Motor neuron (in vitro differentiated cells): ENCODE measurements at regions of chr14 and their contacts with region 1.

Region 1: GRCh38 chr14:71320107-71320733 is 413.0 kb downstream of the PCNX1 start:
- ATAC-seq: peak; percentile 81 to 97 (median 92)
- H3K4me3 ChIP-seq: peak within 1 kb of the TSS; percentile 66 to 100 (median 86)
- H3K27ac ChIP-seq: peak within 1 kb of the TSS; percentile 1 to 38
- H3K4me1 ChIP-seq: no peaks in the 10 kb centered on the region

Region 2: GRCh38 chr14:71138448-71139293 is 181.5 kb before region 1 on chr14:
- in situ Hi-C with region 1: loop called in 1 of 9 experiments (anchors 25 kb)
- ATAC-seq: peak; percentile 61 to 95 (median 79)
- H3K4me3 ChIP-seq: no peak overlapping the region
- H3K27ac ChIP-seq: no peak overlapping the region
- H3K4me1 ChIP-seq: peaks cover 0 to 9% of the 10 kb centered on the region in 2 donors

Region 3: GRCh38 chr14:71166180-71166790 is 153.9 kb before region 1 on chr14:
- in situ Hi-C with region 1: loop called in 1 of 9 experiments (anchors 25 kb)
- ATAC-seq: peak; percentile 55 to 89 (median 74)
- H3K4me3 ChIP-seq: no peak overlapping the region
- H3K27ac ChIP-seq: no peak overlapping the region
- H3K4me1 ChIP-seq: peaks cover 4 to 9% of the 10 kb centered on the region in 2 donors

Region 4: DNA sequence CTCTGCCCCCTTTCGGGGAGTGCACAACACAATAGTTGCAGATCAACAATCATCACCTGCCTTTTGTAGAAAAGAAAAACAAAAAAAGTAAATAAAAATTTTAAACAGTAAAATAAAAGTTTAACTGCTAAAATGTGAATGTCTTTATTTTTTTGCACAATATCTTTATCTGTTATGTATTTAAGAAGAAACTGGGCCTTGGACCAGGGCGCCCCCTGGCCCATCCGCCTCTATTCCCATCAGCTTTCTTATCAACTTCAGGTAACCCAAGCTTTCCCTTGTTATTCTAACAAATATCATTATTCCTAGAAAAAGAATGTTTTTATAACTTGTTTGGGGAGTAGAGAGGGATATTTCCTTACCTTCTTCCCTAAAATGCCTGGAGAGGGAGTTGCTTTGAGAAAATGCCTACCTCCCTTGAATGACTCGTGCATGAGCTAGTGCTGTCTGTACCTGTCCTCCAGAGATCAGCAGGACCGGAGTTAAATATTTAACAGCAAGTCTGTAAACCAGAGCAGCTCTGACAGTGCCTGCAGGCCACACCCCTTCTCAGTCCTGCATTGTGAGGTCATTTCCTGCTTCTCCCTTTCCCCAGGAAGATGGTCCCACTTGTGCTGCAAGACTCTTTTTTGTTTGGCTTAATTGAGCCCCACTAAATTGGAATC is 419.2 kb after region 1 on chr14:
- in situ Hi-C with region 1: loop called in 1 of 9 experiments (anchors 25 kb)
- ATAC-seq: peak in 5 of 8 experiments; percentile 44 to 80 (median 60)
- H3K4me3 ChIP-seq: no peak overlapping the region
- H3K27ac ChIP-seq: no peak overlapping the region
- H3K4me1 ChIP-seq: no peaks in the 10 kb centered on the region